ENCODE measurements at regions of chr14 and their contacts with region 1.

Region 1: DNA sequence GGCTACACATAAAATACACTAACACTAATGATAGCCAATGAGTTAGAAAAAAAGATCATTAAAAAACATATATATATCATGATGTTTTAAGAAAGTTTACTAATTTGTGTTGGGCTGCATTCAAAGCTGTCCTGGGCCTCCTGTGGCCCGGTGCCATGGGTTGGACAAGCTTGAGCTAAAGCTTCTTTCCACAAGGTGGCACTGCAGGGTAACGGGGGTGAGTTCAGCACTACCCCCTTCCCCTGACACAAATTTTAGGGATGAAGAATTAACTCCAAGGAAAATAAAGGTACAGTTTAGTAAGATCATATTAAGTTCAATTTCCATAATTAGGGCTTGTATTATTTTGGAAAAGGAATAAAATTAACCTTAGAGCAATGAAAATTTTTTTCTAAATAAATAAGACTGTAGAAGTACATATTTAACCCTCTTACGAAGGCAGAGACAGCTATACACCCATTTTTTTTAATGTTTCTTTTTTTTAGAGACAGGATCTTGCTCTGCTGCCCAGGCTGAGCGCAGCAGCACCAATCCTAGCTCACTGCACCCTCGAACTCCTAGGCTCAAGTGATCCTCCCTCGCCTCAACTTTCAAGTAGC is 38.9 kb downstream of the PPP1R13B start:
- DNase-seq: peak; percentile 62
- CTCF ChIP-seq: peak; percentile 78

Region 2: DNA sequence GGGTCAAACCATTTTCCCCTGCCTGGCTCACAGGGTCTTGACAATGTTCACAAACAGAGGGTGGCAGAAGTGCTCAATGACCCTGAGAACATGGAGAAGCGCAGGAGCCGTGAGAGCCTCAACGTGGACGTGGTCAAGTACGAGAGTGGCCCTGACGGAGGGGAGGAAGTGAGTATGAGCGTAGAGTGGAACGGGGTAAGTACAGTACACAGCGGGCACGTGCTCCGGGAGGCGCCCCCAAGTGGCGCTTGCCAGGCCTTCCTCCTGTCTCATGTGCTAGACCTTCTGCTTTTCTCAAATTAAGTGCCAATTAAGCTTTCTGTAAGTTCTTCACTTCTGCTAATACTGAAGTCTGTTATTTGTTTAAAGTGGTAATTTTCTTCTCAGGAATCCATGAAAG is 129.2 kb before region 1 on chr14:
- CTCF ChIA-PET with region 1: no interaction called
- POLR2A ChIA-PET with region 1: no interaction called
- DNase-seq: peak; percentile 79
- CTCF ChIP-seq: peak; percentile 56

Region 3: DNA sequence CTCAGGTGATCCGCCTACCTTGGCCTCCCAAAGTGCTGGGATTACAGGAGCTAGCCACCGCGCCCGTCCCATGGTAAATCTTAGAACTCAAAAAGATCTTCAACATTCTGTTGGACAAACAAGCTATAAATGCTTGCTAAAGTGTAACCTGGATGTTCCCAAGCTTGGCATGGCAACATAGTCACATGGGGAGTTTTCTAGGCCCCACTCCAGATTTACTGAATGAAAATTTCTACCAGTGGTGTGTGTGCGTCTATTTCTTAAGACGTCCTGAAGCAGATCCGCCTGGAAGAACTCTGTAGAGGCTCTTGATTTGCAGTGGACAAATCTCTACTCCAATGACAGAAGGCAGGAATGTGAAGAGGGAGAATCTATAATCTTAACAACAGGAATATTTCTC is 33.0 kb before region 1 on chr14:
- CTCF ChIA-PET with region 1: interaction called, 10 read pairs
- POLR2A ChIA-PET with region 1: no interaction called
- DNase-seq: no peak
- CTCF ChIP-seq: no peak

Region 4: DNA sequence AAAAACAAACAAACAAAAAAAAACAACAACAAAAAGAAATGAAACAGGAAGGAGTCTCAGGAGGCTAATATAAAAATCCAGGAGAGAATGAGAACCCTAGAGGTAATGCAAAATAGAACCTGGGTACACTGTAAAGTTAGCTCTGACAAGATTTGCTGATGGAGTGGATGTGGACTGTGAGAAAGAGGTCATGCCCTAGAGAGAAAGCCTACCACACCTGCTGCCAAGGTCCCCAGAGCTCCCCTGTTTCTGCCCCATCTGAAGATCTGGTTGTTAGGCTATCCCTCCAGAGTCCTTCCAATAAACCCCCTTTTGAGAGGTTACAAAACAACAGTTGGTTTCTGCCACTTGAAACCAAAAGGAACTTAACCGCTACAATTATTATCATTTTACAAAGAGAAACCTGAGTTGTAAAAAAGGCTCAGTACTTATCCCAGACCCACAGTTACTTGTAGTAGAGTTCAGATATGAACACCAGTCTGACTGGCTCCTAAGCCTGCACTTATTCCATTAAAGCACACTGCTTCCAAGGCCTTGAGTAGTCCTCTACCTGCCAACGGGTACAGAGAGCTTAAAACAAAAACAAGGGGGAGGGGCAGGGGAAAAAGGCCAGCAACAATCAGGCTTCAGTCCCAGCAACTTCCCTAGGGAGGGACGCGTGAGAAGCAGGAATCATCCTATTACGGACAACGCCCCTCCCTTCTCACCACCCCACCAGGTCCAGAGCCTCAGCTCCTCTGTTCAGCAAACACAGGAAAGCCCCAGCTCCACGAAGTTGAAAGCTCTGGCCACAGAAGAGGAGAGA is 11.2 kb after region 1 on chr14:
- CTCF ChIA-PET with region 1: interaction called, 41 read pairs
- POLR2A ChIA-PET with region 1: interaction called, 3 read pairs
- DNase-seq: peak; percentile 33
- CTCF ChIP-seq: no peak

Region 5: GRCh38 chr14:103897075-103897947 is 88.8 kb after region 1 on chr14:
- CTCF ChIA-PET with region 1: interaction called, 15 read pairs
- POLR2A ChIA-PET with region 1: no interaction called
- DNase-seq: no peak
- CTCF ChIP-seq: no peak

Region 6: GRCh38 chr14:103949131-103949790 is 140.8 kb after region 1 on chr14:
- CTCF ChIA-PET with region 1: no interaction called
- POLR2A ChIA-PET with region 1: no interaction called
- DNase-seq: no peak
- CTCF ChIP-seq: no peak

Region 7: GRCh38 chr14:103969952-103970351 is 161.4 kb after region 1 on chr14:
- CTCF ChIA-PET with region 1: no interaction called
- POLR2A ChIA-PET with region 1: no interaction called
- DNase-seq: no peak
- CTCF ChIP-seq: no peak

Region 8: GRCh38 chr14:103984196-103984595 is 175.7 kb after region 1 on chr14:
- CTCF ChIA-PET with region 1: interaction called, 24 read pairs
- POLR2A ChIA-PET with region 1: no interaction called
- DNase-seq: no peak
- CTCF ChIP-seq: no peak

Measured in GM10248 (cell line).